Uterus (tissue), 4 donors: ENCODE measurements at regions of chr5 and their contacts with region 1.

Region 1: GRCh38 chr5:98904780-98905179 is 24.0 kb downstream of the CHD1 start:
- DNase-seq: no peak
- H3K4me3 ChIP-seq: no peak overlapping the region
- H3K27ac ChIP-seq: no peak overlapping the region
- H3K4me1 ChIP-seq: no peaks in the 10 kb centered on the region
- H3K27me3 ChIP-seq: no peaks in the 10 kb centered on the region
- CTCF ChIP-seq: no peak
- POLR2A ChIP-seq: no peak

Region 2: DNA sequence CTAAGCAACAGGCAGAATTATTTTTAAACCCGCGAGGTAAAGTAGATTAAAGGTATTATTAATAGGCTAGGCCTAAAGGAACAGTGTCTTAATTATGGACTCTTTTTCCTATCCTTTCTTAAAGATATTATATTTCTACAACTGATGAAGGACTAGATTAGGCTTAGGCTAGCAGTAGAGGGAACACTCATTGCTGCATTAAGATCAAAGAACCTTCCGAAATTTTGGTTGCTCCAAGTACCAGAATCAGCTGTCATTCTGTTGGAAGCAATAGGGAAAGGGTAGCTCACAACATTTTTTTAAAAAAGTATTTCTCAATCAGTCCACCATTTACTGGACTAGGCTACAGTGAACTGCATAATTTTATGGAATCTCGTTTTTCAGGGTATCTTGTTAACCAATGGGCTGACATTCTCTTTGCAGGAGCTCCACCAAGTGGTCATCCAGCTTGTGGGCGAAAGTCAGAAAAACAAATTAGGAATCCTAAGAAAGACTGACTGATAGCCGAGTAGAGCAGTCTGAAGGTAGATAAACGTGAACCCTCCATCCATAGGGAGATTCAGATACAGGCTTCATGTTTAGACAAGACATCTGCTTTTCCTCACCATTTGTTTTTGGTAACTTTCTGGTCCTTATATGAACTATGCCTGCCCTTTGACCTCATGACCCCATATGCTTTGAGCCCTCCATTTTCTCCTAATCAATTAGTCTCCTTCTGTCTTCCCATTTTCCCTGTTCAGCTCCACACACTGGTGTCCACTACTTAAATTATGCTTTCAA is 127.6 kb after region 1 on chr5:
- intact Hi-C with region 1: loop called (anchors 5 kb)
- DNase-seq: peak; percentile 67 to 71
- H3K4me3 ChIP-seq: no peak overlapping the region
- H3K27ac ChIP-seq: peak overlapping the region; percentile 61 to 71
- H3K4me1 ChIP-seq: no peaks in the 10 kb centered on the region
- H3K27me3 ChIP-seq: no peaks in the 10 kb centered on the region
- CTCF ChIP-seq: peak; percentile 77 to 84 (median 79)
- POLR2A ChIP-seq: no peak